CD4-positive, alpha-beta T cell (primary cell): ENCODE measurements at regions of chr14 and their contacts with region 1.

Region 1: DNA sequence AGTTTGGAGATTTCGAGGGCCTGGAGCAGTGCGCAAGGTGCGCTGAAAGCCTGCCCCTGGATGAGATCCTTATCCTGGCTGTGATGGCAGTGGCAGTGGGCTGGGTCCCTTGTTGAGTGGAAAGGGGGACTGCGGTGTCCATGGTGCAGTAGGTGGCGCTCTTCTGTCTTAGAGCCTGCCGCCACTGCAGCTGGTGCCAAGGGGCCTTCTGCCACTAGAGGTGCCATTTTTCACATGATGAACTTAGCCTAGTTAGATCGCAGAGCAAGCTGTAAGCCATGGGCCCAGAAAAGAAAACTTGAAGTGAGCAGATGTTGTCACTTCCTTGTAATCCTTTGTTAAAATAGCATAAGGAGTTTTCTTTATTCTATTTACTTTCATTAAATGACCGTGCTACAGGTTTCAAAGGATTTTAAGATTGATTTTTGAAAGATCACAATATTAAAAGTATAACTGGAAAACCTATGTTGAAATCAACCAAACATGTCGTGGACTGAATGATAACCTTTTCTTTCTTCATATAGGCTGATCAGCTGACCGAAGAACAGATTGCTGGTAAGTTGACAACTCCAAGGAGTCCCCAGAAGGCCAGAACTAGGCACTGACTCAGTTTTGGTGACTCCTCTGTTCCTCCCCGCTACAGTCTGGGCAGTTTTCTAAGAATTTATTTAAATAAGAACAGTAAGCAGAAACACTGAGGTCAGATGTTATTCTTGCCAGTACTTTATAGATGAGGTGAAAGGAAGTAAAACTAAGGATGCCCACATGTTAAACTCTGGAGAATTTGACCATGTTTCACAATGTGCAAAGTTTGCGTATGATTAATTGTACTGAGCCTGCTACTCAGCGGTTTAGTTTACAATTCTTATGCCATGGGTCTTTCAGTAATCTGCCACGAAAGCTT is 3.0 kb downstream of the CALM1 start:
- DNase-seq: peak; percentile 72 to 94 (median 80)
- ATAC-seq: peak; percentile 48
- H3K4me3 ChIP-seq: peak overlapping the region; percentile 62
- H3K4me3 Mint-ChIP-seq: peak overlapping the region; percentile 100
- H3K27ac ChIP-seq: peak overlapping the region; percentile 86 to 88
- H3K27ac Mint-ChIP-seq: peak overlapping the region; percentile 100
- H3K4me1 ChIP-seq: peaks cover 52% of the 10 kb centered on the region
- H3K4me1 Mint-ChIP-seq: peaks cover 73% of the 10 kb centered on the region
- H3K27me3 ChIP-seq: no peaks in the 10 kb centered on the region
- H3K27me3 Mint-ChIP-seq: peaks cover 9% of the 10 kb centered on the region
- CTCF ChIP-seq: peak; percentile 100

Region 2: GRCh38 chr14:89892953-89893352 is 506.8 kb before region 1 on chr14:
- CTCF ChIA-PET with region 1: no interaction called
- POLR2A ChIA-PET with region 1: no interaction called
- intact Hi-C with region 1: no loop called
- DNase-seq: no peak
- ATAC-seq: no peak
- H3K4me3 ChIP-seq: no peak overlapping the region
- H3K4me3 Mint-ChIP-seq: no peak overlapping the region
- H3K27ac ChIP-seq: no peak overlapping the region
- H3K27ac Mint-ChIP-seq: no peak overlapping the region
- H3K4me1 ChIP-seq: no peaks in the 10 kb centered on the region
- H3K4me1 Mint-ChIP-seq: no peaks in the 10 kb centered on the region
- H3K27me3 ChIP-seq: no peaks in the 10 kb centered on the region
- H3K27me3 Mint-ChIP-seq: no peaks in the 10 kb centered on the region
- CTCF ChIP-seq: no peak

Region 3: GRCh38 chr14:90331497-90332435 is 68.0 kb before region 1 on chr14 and contains the start of gene NRDE2:
- CTCF ChIA-PET with region 1: interaction called, 6 read pairs
- POLR2A ChIA-PET with region 1: interaction called, 14 read pairs
- intact Hi-C with region 1: loop called (anchors 5 kb)
- DNase-seq: peak; percentile 81 to 99 (median 93)
- ATAC-seq: peak; percentile 95
- H3K4me3 ChIP-seq: peak within 1 kb of the TSS; percentile 83
- H3K4me3 Mint-ChIP-seq: peak within 1 kb of the TSS; percentile 93
- H3K27ac ChIP-seq: peak within 1 kb of the TSS; percentile 60 to 72
- H3K27ac Mint-ChIP-seq: peak within 1 kb of the TSS; percentile 93
- H3K4me1 ChIP-seq: peaks cover 13% of the 10 kb centered on the region
- H3K4me1 Mint-ChIP-seq: peaks cover 40% of the 10 kb centered on the region
- H3K27me3 ChIP-seq: no peaks in the 10 kb centered on the region
- H3K27me3 Mint-ChIP-seq: peaks cover 11% of the 10 kb centered on the region
- CTCF ChIP-seq: no peak
- total RNA-seq, gene NRDE2: 17.5 to 17.9 TPM

Region 4: GRCh38 chr14:90388437-90388836 is 11.4 kb before region 1 on chr14:
- CTCF ChIA-PET with region 1: interaction called, 66 read pairs
- POLR2A ChIA-PET with region 1: interaction called, 423 read pairs
- intact Hi-C with region 1: loop called (anchors 1 kb)
- DNase-seq: peak in 1 of 14 experiments; percentile 34
- ATAC-seq: no peak
- H3K4me3 ChIP-seq: no peak overlapping the region
- H3K4me3 Mint-ChIP-seq: no peak overlapping the region
- H3K27ac ChIP-seq: no peak overlapping the region
- H3K27ac Mint-ChIP-seq: no peak overlapping the region
- H3K4me1 ChIP-seq: peaks cover 21% of the 10 kb centered on the region
- H3K4me1 Mint-ChIP-seq: peaks cover 19% of the 10 kb centered on the region
- H3K27me3 ChIP-seq: no peaks in the 10 kb centered on the region
- H3K27me3 Mint-ChIP-seq: no peaks in the 10 kb centered on the region
- CTCF ChIP-seq: no peak